ENCODE measurements at regions of chr19 and their contacts with region 1.

Region 1: GRCh38 chr19:19663256-19664038 is at the start of gene ATP13A1:
- DNase-seq: peak; percentile 98
- H3K4me3 Mint-ChIP-seq: peak within 1 kb of the TSS; percentile 97
- H3K27ac Mint-ChIP-seq: peak within 1 kb of the TSS; percentile 99
- H3K4me1 Mint-ChIP-seq: peaks cover 34% of the 10 kb centered on the region
- H3K27me3 Mint-ChIP-seq: no peaks in the 10 kb centered on the region
- total RNA-seq, gene ATP13A1: 85.9 and 89.2 TPM in 2 replicates

Region 2: GRCh38 chr19:19591133-19591825 is 72.2 kb before region 1 on chr19:
- intact Hi-C with region 1: loop called (anchors 1 kb)
- DNase-seq: peak; percentile 92
- H3K4me3 Mint-ChIP-seq: peak overlapping the region; percentile 75
- H3K27ac Mint-ChIP-seq: peak overlapping the region; percentile 94
- H3K4me1 Mint-ChIP-seq: peaks cover 60% of the 10 kb centered on the region
- H3K27me3 Mint-ChIP-seq: no peaks in the 10 kb centered on the region

Region 3: GRCh38 chr19:19618219-19619051 is 45.0 kb before region 1 on chr19 and contains the start of gene PBX4:
- intact Hi-C with region 1: loop called (anchors 2 kb)
- DNase-seq: peak; percentile 100
- H3K4me3 Mint-ChIP-seq: peak within 1 kb of the TSS; percentile 86
- H3K27ac Mint-ChIP-seq: peak within 1 kb of the TSS; percentile 88
- H3K4me1 Mint-ChIP-seq: peaks cover 40% of the 10 kb centered on the region
- H3K27me3 Mint-ChIP-seq: no peaks in the 10 kb centered on the region
- total RNA-seq, gene PBX4: 19.2 and 20.5 TPM in 2 replicates

Region 4: GRCh38 chr19:19732579-19733501 is 69.4 kb after region 1 on chr19 and contains the start of gene ZNF14:
- intact Hi-C with region 1: loop called (anchors 2 kb)
- DNase-seq: peak; percentile 96
- H3K4me3 Mint-ChIP-seq: peak within 1 kb of the TSS; percentile 99
- H3K27ac Mint-ChIP-seq: peak within 1 kb of the TSS; percentile 94
- H3K4me1 Mint-ChIP-seq: peaks cover 13% of the 10 kb centered on the region
- H3K27me3 Mint-ChIP-seq: no peaks in the 10 kb centered on the region
- total RNA-seq, gene ZNF14: 4.7 and 4.8 TPM in 2 replicates

Region 5: DNA sequence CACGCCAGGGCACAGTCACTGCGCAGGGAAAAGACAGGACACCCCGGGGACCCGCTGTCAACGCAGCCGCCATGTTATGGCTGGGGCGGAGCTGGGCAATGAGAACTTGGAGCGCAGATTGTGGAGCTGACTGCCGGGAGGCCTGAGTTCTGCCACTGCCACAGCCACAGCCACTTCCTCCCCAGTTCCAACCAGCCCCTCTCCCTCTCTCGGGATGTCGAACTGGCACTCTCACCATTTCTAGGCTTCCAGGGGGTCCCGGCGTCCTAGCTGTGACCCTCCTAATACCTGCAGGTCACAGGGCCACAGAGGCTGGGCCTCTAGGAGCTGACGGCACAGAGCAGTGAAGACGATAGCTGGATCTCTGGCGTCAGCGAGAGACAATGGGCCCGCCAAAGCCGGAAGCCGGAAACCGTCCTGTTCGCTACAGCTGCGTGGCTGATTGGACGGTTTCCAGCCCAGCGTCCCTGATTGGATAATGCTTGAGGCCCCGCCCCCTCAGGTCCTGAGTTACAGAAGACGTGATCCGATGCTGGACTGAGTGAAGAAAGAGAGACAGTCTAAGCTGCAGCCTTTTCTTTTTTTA is 158.0 kb after region 1 on chr19 and contains the start of gene ZNF506:
- intact Hi-C with region 1: loop called (anchors 1 kb)
- DNase-seq: peak; percentile 97
- H3K4me3 Mint-ChIP-seq: peak within 1 kb of the TSS; percentile 98
- H3K27ac Mint-ChIP-seq: peak within 1 kb of the TSS; percentile 99
- H3K4me1 Mint-ChIP-seq: peaks cover 12% of the 10 kb centered on the region
- H3K27me3 Mint-ChIP-seq: no peaks in the 10 kb centered on the region
- total RNA-seq, gene ZNF506: 13.3 and 16.2 TPM in 2 replicates

Region 6: DNA sequence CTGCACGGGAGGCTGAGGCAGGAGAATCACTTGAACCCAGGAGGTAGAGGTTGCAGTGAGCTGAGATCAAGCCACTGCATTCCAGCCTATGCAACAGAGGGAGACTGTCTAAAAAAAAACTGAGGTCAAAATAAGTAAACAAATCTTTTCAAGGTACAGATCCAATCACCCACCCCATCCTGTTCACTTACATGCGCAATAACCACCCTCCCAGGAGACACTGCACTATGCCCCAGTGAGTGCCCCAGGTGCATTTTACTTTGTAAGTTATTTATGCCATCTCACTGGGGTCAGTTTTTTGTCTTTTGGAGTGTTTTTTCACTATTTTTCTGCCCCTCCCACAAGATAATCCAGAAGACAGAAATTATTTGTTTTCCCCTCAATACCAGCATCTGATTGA is 195.3 kb after region 1 on chr19:
- intact Hi-C with region 1: no loop called
- DNase-seq: no peak
- H3K4me3 Mint-ChIP-seq: no peak overlapping the region
- H3K27ac Mint-ChIP-seq: no peak overlapping the region
- H3K4me1 Mint-ChIP-seq: peaks cover 1% of the 10 kb centered on the region
- H3K27me3 Mint-ChIP-seq: no peaks in the 10 kb centered on the region

Region 7: DNA sequence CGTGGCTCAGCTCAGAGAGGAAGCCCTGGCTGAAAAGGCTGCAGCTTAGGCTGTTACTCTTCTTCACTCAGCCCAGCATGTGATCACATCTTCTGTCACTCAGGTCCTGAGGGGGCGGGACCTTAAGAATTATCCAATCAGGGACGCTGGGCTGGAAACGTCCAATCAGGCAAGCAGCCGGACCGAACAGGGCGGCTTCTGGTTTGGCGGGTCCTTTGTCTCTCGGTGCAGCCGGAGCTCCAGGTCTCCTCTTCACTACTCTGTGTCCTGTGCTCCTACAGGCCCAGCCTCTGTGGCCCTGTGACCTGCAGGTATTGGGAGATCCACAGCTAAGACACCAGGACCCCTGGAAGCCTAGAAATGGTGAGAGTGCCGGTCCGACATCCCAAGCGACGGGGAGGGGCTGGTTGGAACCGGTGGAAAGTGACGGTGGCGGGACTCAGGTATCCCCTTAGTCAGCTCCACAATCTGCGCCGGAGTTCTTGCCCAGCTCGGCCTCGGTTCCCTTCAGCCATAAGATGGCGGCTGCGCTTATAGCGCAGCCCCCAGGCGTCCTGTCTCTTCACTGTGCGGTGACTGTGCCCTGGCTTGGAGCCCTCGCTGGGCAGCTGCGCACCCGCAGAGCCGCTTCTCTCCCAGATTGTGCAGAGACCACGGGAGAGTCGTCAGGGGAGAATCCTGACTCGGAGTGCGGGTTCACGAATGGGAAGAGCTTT is 237.4 kb after region 1 on chr19 and contains the start of gene ZNF93:
- intact Hi-C with region 1: loop called (anchors 10 kb)
- DNase-seq: peak; percentile 96
- H3K4me3 Mint-ChIP-seq: peak within 1 kb of the TSS; percentile 96
- H3K27ac Mint-ChIP-seq: peak within 1 kb of the TSS; percentile 97
- H3K4me1 Mint-ChIP-seq: peaks cover 12% of the 10 kb centered on the region
- H3K27me3 Mint-ChIP-seq: no peaks in the 10 kb centered on the region
- total RNA-seq, gene ZNF93: 7.2 and 8.3 TPM in 2 replicates

Region 8: DNA sequence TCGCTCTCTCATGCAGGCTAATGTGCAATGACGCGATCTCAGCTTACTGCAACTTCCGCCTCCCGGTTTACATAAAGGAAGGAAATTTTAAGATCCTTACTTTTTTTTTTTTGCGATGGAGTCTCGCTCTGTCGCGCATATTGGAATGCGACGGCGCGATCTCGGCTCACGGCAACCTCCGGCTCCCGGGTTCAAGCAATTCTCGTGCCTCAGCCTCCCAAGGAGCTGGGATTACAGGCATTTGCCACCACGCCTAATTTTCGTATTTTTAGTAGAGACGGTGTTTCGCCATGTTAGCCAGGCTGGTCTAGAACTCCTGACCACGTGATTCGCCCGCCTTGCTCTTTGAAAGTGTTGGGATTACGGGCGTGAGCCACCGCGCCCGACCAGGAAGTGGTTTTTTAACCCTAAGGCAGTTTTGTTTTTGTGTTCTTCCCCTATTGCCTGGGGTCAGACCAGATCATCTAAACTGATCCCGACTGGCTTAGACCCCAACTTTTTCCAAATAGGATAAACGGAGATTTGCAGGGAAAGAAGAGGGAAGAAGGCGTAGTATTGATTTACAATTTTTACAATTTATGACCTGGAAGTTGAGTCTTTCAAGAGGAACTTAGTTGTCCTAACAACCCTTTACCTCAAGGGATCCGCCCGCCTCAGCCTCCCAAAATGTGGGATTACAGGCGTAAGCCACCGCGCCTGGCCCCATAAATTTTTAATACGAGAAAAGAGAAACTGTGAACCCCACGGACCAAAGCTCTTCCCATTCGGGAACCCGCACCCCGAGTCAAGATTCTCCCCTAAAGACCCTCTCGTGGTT is 760.1 kb after region 1 on chr19:
- intact Hi-C with region 1: loop called (anchors 10 kb)
- DNase-seq: peak; percentile 76
- H3K4me3 Mint-ChIP-seq: peak overlapping the region; percentile 97
- H3K27ac Mint-ChIP-seq: peak overlapping the region; percentile 98
- H3K4me1 Mint-ChIP-seq: peaks cover 3% of the 10 kb centered on the region
- H3K27me3 Mint-ChIP-seq: no peaks in the 10 kb centered on the region